Heart left ventricle (tissue), 16 donors: ENCODE measurements at regions of chr20 and their contacts with region 1.

Region 1: DNA sequence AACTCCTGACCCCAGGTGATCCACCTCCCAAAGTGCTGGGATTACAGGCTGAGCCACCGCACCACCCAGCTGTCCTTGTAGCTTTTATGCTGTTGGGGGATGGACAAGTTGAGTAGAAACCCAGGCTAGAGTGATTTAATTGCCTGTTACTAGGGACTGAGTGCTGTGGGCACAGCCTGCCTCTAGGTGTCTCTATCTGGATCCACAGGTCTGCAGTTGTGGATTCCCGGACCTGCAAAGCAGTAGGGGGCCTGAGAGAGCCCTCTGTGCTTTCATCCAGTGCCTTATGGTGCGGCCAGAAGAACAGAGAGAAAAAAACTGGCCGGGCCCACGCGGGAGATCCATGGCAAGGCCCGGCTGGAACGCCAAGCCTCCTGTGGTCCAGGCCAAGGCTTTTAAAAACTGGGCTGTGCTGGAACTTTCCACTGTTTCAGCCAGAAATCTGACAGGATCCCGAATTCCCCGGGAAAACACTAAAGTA is 5.2 kb downstream of the SIRPA start:
- DNase-seq: peak; percentile 38 to 62 (median 49)
- ATAC-seq: peak; percentile 70 to 83 (median 82)
- H3K4me3 ChIP-seq: no peak overlapping the region
- H3K27ac ChIP-seq: peak overlapping the region in 7 of 12 donors; percentile 8 to 49 (median 41)
- H3K4me1 ChIP-seq: peaks cover 0 to 50% (median 28%) of the 10 kb centered on the region in 12 donors
- H3K27me3 ChIP-seq: no peaks in the 10 kb centered on the region
- CTCF ChIP-seq: peak in 11 of 12 donors; percentile 12 to 77 (median 48)
- POLR2A ChIP-seq: no peak

Region 2: GRCh38 chr20:1577906-1578305 is 322.5 kb before region 1 on chr20:
- intact Hi-C with region 1: no loop called
- DNase-seq: no peak
- ATAC-seq: no peak
- H3K4me3 ChIP-seq: no peak overlapping the region
- H3K27ac ChIP-seq: no peak overlapping the region
- H3K4me1 ChIP-seq: no peaks in the 10 kb centered on the region
- H3K27me3 ChIP-seq: no peaks in the 10 kb centered on the region
- CTCF ChIP-seq: no peak
- POLR2A ChIP-seq: no peak

Region 3: DNA sequence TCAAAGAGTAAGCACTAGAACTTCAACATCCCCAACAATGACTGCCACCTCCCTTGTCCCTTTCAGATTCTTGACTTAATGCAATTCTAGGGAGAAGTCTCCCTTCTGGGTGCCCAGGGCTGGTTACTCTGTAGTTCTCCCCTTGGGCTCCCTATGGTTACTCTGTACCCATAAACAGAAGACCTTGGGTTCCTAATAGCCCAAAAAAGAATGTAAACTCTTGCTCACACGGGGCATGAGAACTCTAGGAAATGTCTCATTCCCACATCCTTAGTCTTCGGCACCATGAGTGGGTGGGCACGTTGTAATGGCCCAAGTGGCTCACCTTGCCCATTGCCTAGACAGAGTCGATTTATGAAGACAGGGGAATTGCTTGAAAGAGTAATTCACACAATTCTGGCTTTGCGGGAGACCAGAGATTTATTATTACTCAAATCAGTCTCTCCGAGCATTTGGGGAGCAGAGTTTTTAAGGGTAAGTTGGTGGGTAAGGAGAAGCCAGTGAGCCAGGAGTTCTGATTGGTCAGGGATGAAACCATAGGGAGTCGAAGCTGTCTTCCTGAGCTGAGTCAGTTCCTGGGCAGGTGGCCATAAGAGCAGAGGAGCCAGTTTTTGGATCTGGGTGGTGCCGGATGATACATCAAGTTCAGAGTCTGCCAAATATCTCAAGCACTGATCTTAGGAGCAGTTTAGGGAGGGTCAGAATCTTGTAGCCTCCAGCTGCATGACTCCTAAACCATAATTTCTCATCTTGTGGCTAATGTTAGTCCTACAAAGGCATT is 181.6 kb before region 1 on chr20:
- intact Hi-C with region 1: no loop called
- DNase-seq: no peak
- ATAC-seq: no peak
- H3K4me3 ChIP-seq: no peak overlapping the region
- H3K27ac ChIP-seq: no peak overlapping the region
- H3K4me1 ChIP-seq: no peaks in the 10 kb centered on the region
- H3K27me3 ChIP-seq: peaks cover 0 to 15% (median 0%) of the 10 kb centered on the region in 9 donors
- CTCF ChIP-seq: no peak
- POLR2A ChIP-seq: no peak

Region 4: GRCh38 chr20:1934721-1935573 is 34.6 kb after region 1 on chr20:
- intact Hi-C with region 1: loop called in 1 of 10 experiments (anchors 2 kb)
- DNase-seq: peak in 2 of 5 donors; percentile 80 to 82
- ATAC-seq: peak; percentile 9 to 75 (median 54)
- H3K4me3 ChIP-seq: no peak overlapping the region
- H3K27ac ChIP-seq: peak overlapping the region in 10 of 12 donors; percentile 25 to 79 (median 60)
- H3K4me1 ChIP-seq: peaks cover 0 to 37% (median 23%) of the 10 kb centered on the region in 12 donors
- H3K27me3 ChIP-seq: no peaks in the 10 kb centered on the region
- CTCF ChIP-seq: no peak
- POLR2A ChIP-seq: no peak

Region 5: GRCh38 chr20:1965520-1966351 is 65.4 kb after region 1 on chr20:
- intact Hi-C with region 1: no loop called
- DNase-seq: peak; percentile 54 to 84 (median 70)
- ATAC-seq: peak; percentile 20 to 88 (median 74)
- H3K4me3 ChIP-seq: peak overlapping the region in 4 of 12 donors; percentile 9 to 33 (median 18)
- H3K27ac ChIP-seq: peak overlapping the region in 1 of 12 donors; percentile 70
- H3K4me1 ChIP-seq: peaks cover 0 to 26% (median 0%) of the 10 kb centered on the region in 12 donors
- H3K27me3 ChIP-seq: peaks cover 0 to 4% (median 0%) of the 10 kb centered on the region in 9 donors
- CTCF ChIP-seq: peak; percentile 79 to 96 (median 91)
- POLR2A ChIP-seq: no peak

Region 6: GRCh38 chr20:2065099-2065498 is 164.7 kb after region 1 on chr20:
- intact Hi-C with region 1: no loop called
- DNase-seq: no peak
- ATAC-seq: no peak
- H3K4me3 ChIP-seq: no peak overlapping the region
- H3K27ac ChIP-seq: no peak overlapping the region
- H3K4me1 ChIP-seq: no peaks in the 10 kb centered on the region
- H3K27me3 ChIP-seq: peaks cover 0 to 26% (median 11%) of the 10 kb centered on the region in 9 donors
- CTCF ChIP-seq: no peak
- POLR2A ChIP-seq: no peak